ENCODE measurements at regions of chr15 and their contacts with region 1.

Region 1: DNA sequence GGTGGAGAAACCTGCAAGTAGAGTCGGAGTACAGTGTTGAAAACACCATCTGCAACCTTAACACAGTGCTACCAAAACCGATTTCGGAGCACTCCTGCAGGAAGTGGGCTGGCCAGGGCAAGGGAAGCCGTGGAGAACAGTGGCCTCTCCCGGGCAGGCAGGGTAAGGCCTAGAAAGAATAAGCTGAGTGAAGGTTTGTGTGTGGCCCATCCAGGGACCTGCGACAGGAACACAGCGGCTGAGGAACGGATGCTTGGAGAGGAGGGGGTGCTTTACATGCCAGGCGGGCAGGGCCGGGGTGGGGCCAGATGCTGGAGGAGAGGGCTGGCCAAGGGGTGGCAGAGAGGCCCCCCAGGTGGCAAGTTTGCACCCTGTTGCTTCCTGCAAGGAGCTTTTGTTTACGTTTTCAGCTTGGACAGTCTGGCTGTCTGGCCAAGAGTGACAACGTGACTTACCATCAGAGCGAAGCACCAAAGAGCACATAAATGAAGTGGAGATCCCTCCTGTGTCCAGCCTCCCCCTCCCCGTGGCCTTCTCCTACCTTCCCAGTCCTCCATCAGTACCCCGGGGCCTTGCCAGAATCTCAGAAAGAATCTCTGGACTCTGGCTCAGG is 156.5 kb downstream of the PGPEP1L start:
- DNase-seq: peak; percentile 82
- ATAC-seq: peak; percentile 72

Region 2: GRCh38 chr15:98647774-98648653 is 203.1 kb before region 1 on chr15 and contains the start of gene IGF1R:
- intact Hi-C with region 1: loop called (anchors 1 kb)
- DNase-seq: peak; percentile 94
- ATAC-seq: peak; percentile 90
- total RNA-seq, gene IGF1R: 26.3 TPM

Region 3: GRCh38 chr15:98978153-98978552 is 127.1 kb after region 1 on chr15:
- intact Hi-C with region 1: no loop called
- DNase-seq: no peak
- ATAC-seq: no peak

Measured in Right ventricle myocardium inferior (tissue), 1 donor.